ENCODE measurements at regions of chr1 and their contacts with region 1.

Region 1: DNA sequence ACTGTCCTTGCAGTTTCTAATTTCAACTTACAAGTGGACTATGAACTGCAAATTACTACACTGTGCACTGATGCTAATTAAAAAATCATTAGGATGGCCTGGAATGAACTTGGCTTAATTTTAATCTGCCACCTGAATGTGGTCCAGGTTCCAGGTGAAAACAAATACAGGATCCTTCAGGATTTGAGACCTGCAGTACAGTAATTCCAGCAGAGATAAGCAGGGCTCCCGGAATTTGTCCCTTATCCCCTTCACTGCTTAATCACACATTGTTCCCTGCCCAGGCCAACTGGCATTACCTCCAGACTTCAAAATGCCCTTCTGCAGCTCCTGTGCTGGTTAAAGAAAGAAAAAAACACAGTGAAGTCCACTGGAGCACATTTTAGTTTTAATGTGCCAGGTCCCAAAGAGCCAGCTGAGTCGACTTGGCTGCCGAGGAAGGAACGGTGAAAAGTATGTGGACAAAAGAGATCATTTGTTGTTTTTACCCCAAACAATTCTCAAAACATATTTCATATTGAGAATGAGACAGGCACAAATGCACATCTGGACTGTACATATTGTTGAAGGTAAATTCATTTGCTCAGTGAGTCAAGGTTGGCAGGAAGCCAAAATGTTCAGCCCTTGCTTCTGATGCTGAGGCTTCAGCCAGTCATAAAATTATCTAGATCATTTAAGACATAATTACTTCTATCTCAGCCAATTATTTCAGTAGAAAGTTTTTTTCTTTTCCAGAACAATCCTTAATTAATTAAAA is 28.3 kb downstream of the DEGS1 start:
- DNase-seq: peak in 1 of 2 experiments; percentile 64
- H3K4me3 ChIP-seq: no peak overlapping the region
- H3K27ac ChIP-seq: peak overlapping the region; percentile 80
- H3K4me1 ChIP-seq: peaks cover 41% of the 10 kb centered on the region
- H3K27me3 ChIP-seq: no peaks in the 10 kb centered on the region
- CTCF ChIP-seq: no peak

Region 2: DNA sequence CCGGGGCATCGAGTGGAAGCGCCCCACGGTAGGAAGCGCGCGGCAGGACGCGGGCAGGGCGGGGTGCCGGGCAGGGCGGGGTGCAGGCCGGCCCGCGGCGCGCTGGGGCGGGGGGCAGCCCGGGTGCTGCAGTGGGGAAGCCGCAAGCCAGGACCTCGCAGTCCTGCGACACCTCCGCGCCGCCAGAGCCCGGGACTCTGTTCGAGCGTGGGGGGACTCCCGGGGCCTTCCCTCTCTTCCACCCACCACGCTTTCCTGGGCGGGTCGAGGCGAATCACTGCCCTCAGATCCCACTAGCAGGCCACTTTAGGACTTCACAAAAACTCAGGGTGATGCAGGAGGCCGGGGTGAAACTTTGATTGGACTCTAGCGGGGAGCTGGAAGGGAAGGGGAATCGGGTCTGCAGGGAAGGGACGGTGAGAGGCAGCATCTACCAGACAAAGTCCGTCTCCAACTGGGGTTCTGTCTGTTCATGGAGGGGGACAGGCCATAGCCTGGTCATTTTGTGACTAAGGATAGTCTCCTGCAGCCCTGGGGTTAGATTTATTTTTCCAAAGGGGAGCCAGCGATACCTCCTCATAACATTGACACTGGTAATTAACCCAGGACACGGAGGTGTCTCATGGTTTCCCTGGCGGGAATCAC is 498.4 kb before region 1 on chr1:
- CTCF ChIA-PET with region 1: no interaction called
- POLR2A ChIA-PET with region 1: interaction called, 16 read pairs
- intact Hi-C with region 1: no loop called
- DNase-seq: peak in 1 of 2 experiments; percentile 32
- H3K4me3 ChIP-seq: peak overlapping the region; percentile 79
- H3K27ac ChIP-seq: peak overlapping the region; percentile 92
- H3K4me1 ChIP-seq: peaks cover 78% of the 10 kb centered on the region
- H3K27me3 ChIP-seq: no peaks in the 10 kb centered on the region
- CTCF ChIP-seq: no peak

Region 3: GRCh38 chr1:224168859-224169380 is 42.5 kb before region 1 on chr1:
- CTCF ChIA-PET with region 1: interaction called, 4 read pairs
- POLR2A ChIA-PET with region 1: no interaction called
- intact Hi-C with region 1: loop called (anchors 2 kb)
- DNase-seq: peak; percentile 56 to 79
- H3K4me3 ChIP-seq: no peak overlapping the region
- H3K27ac ChIP-seq: peak overlapping the region; percentile 46
- H3K4me1 ChIP-seq: peaks cover 23% of the 10 kb centered on the region
- H3K27me3 ChIP-seq: no peaks in the 10 kb centered on the region
- CTCF ChIP-seq: no peak

Region 4: DNA sequence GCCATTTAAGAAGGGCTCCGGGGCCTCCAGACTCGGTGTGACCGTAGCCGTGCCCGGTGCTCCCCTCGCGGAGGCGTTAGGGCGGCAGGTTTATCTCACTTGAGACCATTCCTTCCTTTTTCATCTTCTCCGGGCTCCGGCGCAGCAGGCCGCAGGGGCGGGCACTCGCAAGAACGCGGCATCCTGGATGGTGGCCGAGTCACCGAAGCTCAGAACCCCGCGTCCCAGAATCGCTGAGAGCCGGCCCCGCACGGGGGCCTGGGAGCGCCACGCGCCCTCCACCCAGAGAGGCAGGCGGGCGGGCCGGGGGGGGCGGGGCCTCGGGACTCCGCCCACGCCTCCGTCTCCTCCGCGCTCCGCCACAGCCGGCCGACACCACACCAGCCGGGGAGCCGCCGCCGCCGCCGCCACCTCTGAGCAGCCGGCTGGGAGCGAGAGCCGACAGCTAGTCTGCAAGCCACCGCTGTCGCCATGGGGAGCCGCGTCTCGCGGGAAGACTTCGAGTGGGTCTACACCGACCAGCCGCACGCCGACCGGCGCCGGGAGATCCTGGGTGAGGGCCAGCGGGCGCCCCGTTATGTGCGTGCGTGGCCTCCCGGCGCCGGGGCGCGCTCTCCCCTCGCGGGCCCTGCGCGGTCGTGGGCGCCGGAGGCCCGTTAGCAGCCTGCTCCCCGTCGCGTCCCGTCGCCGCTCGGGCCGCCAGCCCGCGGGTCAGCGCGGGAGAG is 28.4 kb before region 1 on chr1 and contains the start of gene DEGS1:
- CTCF ChIA-PET with region 1: no interaction called
- POLR2A ChIA-PET with region 1: interaction called, 3 read pairs
- intact Hi-C with region 1: loop called (anchors 1 kb)
- DNase-seq: peak; percentile 67 to 87
- H3K4me3 ChIP-seq: peak within 1 kb of the TSS; percentile 75
- H3K27ac ChIP-seq: peak within 1 kb of the TSS; percentile 82
- H3K4me1 ChIP-seq: peaks cover 15% of the 10 kb centered on the region
- H3K27me3 ChIP-seq: no peaks in the 10 kb centered on the region
- CTCF ChIP-seq: no peak
- total RNA-seq, gene DEGS1: 19.2 and 20.0 TPM in 2 replicates